HepG2 (cell line): ENCODE measurements at regions of chr9 and their contacts with region 1.

Region 1: GRCh38 chr9:136944519-136945279 is at the starts of genes C8G and FBXW5:
- DNase-seq: peak; percentile 87
- ATAC-seq: peak; percentile 25
- H3K4me3 ChIP-seq: peak within 1 kb of the TSS; percentile 90 to 95 (median 91)
- H3K27ac ChIP-seq: peak within 1 kb of the TSS; percentile 75
- H3K4me1 ChIP-seq: peaks cover 44% of the 10 kb centered on the region
- H3K27me3 ChIP-seq: no peaks in the 10 kb centered on the region
- CTCF ChIP-seq: peak; percentile 92
- EP300 ChIP-seq: no peak; a peak in 1 of 4 replicates
- POLR2A ChIP-seq: no peak
- RAD21 ChIP-seq: peak; percentile 52; the same call in 1 of the 2 replicates
- total RNA-seq, gene C8G: 2.0 and 4.9 TPM in 2 replicates
- total RNA-seq, gene FBXW5: 47.4 and 60.4 TPM in 2 replicates

Region 2: GRCh38 chr9:137000177-137000883 is 55.6 kb after region 1 on chr9:
- CTCF ChIA-PET with region 1: no interaction called
- POLR2A ChIA-PET with region 1: interaction called, 11 read pairs
- in situ Hi-C with region 1: no loop called
- intact Hi-C with region 1: no loop called
- DNase-seq: no peak
- ATAC-seq: no peak
- H3K4me3 ChIP-seq: peak overlapping the region; percentile 24 to 52 (median 28); a peak in 2 of 6 replicates
- H3K27ac ChIP-seq: no peak overlapping the region
- H3K4me1 ChIP-seq: peaks cover 61% of the 10 kb centered on the region
- H3K27me3 ChIP-seq: no peaks in the 10 kb centered on the region
- CTCF ChIP-seq: no peak
- EP300 ChIP-seq: no peak
- POLR2A ChIP-seq: no peak
- RAD21 ChIP-seq: no peak

Region 3: DNA sequence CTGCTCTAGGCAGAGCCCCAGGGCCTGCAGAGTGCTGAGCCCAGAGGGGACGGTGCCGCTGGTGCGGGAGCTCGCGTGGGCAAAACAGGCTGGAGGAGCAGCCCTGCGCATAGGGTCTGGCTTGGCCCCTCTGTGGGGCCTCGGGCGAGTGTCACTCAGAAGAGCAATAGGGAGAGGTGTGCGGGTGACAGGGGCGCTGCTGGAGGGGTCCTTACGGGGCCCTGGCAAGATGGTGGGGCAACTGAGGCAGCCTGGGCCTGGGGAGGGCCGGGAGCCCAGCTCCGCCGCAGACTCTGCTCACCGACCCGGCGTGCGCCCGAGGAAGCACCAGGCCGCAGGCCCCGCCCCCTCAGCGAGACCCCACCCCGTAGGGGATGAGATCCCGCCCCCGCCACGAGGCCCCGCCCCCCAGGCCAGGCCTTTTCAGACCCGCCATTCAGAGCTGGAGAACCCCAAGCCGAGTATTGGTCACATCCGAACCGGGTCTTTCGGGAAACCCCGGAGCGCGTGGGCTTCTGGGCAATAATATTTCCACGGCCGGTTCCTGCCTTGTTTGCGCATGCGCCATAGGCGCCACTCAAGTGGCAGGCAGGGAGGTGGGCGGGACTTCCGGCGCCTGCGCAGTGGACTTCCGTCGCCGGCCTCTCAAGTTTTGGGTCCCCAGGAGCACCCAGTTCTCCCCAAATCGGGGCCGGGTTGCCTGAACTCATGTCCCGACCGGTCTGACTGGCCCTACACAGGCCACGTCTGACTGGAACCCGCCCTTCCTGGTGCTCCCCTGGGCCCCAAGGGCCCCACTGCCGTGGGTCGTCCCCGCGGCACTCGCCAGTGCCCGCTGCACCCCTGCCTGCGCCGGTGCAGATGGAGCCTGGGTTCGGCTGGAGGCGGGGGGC is 278.6 kb after region 1 on chr9:
- CTCF ChIA-PET with region 1: no interaction called
- POLR2A ChIA-PET with region 1: no interaction called
- in situ Hi-C with region 1: no loop called
- intact Hi-C with region 1: no loop called
- DNase-seq: peak; percentile 98
- ATAC-seq: peak; percentile 44
- H3K4me3 ChIP-seq: peak overlapping the region; percentile 84 to 99 (median 92)
- H3K27ac ChIP-seq: peak overlapping the region; percentile 76
- H3K4me1 ChIP-seq: peaks cover 64% of the 10 kb centered on the region
- H3K27me3 ChIP-seq: no peaks in the 10 kb centered on the region; a peak in 1 of 5 replicates
- CTCF ChIP-seq: no peak
- EP300 ChIP-seq: no peak
- POLR2A ChIP-seq: peak in 1 of 2 experiments; percentile 30; a peak in 1 of 4 replicates
- RAD21 ChIP-seq: peak; percentile 30; the same call in 1 of the 2 replicates